ENCODE measurements at regions of chr1 and their contacts with region 1.

Region 1: GRCh38 chr1:117735045-117735992 is 129.5 kb downstream of the TENT5C start:
- DNase-seq: peak in 14 of 35 experiments; percentile 6 to 70 (median 16)
- ATAC-seq: peak; percentile 64 to 77 (median 72)
- H3K4me3 ChIP-seq: peak overlapping the region; percentile 23 to 34
- H3K4me3 Mint-ChIP-seq: peak overlapping the region; percentile 74 to 78 (median 77)
- H3K27ac ChIP-seq: peak overlapping the region; percentile 66
- H3K27ac Mint-ChIP-seq: peak overlapping the region; percentile 93 to 94
- H3K4me1 ChIP-seq: peaks cover 5 to 10% of the 10 kb centered on the region in 2 experiments
- H3K4me1 Mint-ChIP-seq: peaks cover 18 to 23% (median 22%) of the 10 kb centered on the region in 3 donors
- H3K27me3 ChIP-seq: no peaks in the 10 kb centered on the region
- H3K27me3 Mint-ChIP-seq: no peaks in the 10 kb centered on the region

Region 2: DNA sequence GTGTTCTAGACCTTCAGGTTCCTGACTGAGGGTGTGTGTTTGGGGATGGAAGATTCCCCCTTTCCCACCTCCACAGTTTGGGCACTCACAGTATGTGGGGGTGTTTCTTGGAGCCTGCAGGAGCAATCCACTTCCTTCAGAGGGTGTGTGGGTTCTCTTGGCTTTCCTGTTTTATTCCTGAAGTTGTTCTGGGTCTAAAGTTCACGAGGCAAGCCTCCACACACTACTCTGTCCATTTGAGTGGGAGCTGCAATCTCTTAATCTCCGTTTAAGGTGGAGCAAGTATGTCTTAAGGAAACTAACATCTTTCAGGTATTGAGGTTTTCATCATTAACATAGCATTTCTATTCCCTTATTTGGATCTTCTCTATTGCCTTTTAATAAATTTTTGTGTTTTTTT is 12.3 kb after region 1 on chr1:
- CTCF ChIA-PET with region 1: no interaction called
- POLR2A ChIA-PET with region 1: no interaction called
- DNase-seq: no peak
- ATAC-seq: no peak
- H3K4me3 ChIP-seq: no peak overlapping the region
- H3K4me3 Mint-ChIP-seq: no peak overlapping the region
- H3K27ac ChIP-seq: no peak overlapping the region
- H3K27ac Mint-ChIP-seq: no peak overlapping the region
- H3K4me1 ChIP-seq: no peaks in the 10 kb centered on the region
- H3K4me1 Mint-ChIP-seq: no peaks in the 10 kb centered on the region
- H3K27me3 ChIP-seq: peaks cover 0 to 11% of the 10 kb centered on the region in 2 experiments
- H3K27me3 Mint-ChIP-seq: peaks cover 21 to 25% of the 10 kb centered on the region in 2 donors

Region 3: DNA sequence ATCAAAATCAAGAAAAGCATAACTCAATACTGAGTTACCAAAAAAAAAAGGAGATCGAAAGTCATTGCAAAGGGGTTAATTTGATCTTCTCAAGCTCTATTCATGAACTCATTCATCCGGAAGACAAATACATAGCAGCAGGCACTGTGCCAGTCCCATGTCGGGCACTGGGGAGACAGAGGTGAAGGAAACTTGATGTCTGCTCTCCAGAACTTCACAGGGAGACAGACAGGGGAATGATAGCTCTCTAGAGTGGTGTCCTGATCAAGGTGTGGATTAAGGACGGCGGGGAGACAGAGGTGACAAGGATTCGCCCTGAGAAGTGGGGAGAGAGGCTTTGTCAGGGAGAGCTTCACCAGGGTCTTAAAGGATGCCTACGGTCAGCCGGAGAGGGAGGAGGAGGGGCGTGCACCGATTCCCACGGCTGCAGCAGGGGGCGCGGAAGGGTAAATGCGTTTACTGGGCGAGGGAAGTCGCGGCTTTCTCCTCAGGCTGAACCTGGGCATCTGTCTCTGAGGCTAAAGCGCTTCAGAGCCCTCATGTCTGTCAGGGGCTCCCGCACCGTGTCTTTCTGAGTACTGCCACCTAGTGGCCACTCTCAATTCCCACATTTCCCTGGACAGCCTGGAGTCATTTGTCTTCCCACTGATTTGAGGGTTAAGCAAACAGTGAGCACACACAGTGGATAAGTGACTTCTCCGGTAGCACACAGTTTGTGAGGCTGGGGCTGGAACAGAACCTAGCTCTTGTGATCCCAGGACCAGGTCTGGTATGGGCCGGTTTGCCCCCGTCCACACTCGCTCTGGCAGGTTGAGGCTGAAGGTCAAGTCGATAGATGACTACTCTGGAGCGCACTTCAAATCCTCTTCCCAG is 23.4 kb after region 1 on chr1:
- CTCF ChIA-PET with region 1: interaction called, 4 to 12 read pairs
- POLR2A ChIA-PET with region 1: interaction called, 3 read pairs
- DNase-seq: peak; percentile 30 to 82 (median 52)
- ATAC-seq: peak; percentile 86 to 92 (median 88)
- H3K4me3 ChIP-seq: peak overlapping the region; percentile 5 to 49
- H3K4me3 Mint-ChIP-seq: peak overlapping the region; percentile 74 to 79 (median 75)
- H3K27ac ChIP-seq: no peak overlapping the region
- H3K27ac Mint-ChIP-seq: no peak overlapping the region
- H3K4me1 ChIP-seq: peaks cover 0 to 15% of the 10 kb centered on the region in 2 experiments
- H3K4me1 Mint-ChIP-seq: peaks cover 9 to 11% (median 11%) of the 10 kb centered on the region in 3 donors
- H3K27me3 ChIP-seq: peaks cover 2 to 17% of the 10 kb centered on the region in 2 experiments
- H3K27me3 Mint-ChIP-seq: peaks cover 8 to 19% of the 10 kb centered on the region in 2 donors

Region 4: DNA sequence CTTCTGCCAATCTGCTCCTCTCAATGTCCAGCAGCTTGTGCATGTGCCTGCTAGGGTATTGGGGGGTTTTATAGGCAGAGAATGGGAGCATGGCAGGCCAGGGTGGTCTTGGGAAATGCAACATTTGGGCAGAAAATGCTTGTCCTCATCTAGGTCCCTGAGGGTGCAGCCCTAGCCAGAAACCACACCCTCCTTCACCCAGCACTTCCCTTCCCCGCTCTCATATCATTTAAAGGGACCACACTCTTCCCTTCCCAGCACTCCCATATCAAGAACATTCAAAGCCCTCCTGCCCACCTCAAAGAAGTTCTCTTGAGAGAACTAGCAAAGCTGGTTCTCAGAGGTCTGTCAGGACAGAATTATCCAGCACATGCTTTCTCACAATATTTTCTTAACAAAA is 1833.8 kb after region 1 on chr1:
- CTCF ChIA-PET with region 1: no interaction called
- POLR2A ChIA-PET with region 1: no interaction called
- DNase-seq: no peak
- ATAC-seq: no peak
- H3K4me3 ChIP-seq: no peak overlapping the region
- H3K4me3 Mint-ChIP-seq: no peak overlapping the region
- H3K27ac ChIP-seq: no peak overlapping the region
- H3K27ac Mint-ChIP-seq: no peak overlapping the region
- H3K4me1 ChIP-seq: no peaks in the 10 kb centered on the region
- H3K4me1 Mint-ChIP-seq: peaks cover 0 to 5% (median 0%) of the 10 kb centered on the region in 3 donors
- H3K27me3 ChIP-seq: peaks cover 0 to 5% of the 10 kb centered on the region in 2 experiments
- H3K27me3 Mint-ChIP-seq: peaks cover 18 to 35% of the 10 kb centered on the region in 2 donors

Measured in T-cell (primary cell).